GM10248 (cell line): ENCODE measurements at regions of chr14 and their contacts with region 1.

Region 1: DNA sequence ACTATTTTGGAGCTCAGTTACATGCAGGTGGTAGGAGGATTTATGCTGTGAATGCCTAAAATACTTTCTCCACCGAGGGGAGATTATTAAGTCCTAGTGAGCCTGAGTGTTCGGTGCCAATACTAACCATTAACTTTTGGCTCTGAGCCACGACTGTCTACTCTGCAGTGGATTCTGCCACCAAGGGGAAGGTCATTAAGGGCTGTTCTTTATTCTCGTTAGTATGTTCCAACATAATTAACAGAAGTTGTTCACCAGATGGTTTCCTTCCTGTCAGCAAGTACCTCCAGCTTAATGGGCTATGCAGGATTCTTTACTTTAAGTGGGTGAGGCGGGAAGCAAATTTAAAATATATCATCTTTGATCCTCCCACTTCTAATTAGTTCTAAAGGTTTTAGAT is 326.3 kb downstream of the BMP4 start:
- DNase-seq: no peak
- CTCF ChIP-seq: no peak

Region 2: GRCh38 chr14:53247596-53248370 is 382.6 kb before region 1 on chr14:
- CTCF ChIA-PET with region 1: no interaction called
- POLR2A ChIA-PET with region 1: no interaction called
- DNase-seq: no peak
- CTCF ChIP-seq: no peak

Region 3: GRCh38 chr14:53591816-53592215 is 38.5 kb before region 1 on chr14:
- CTCF ChIA-PET with region 1: no interaction called
- POLR2A ChIA-PET with region 1: no interaction called
- DNase-seq: no peak
- CTCF ChIP-seq: no peak

Region 4: DNA sequence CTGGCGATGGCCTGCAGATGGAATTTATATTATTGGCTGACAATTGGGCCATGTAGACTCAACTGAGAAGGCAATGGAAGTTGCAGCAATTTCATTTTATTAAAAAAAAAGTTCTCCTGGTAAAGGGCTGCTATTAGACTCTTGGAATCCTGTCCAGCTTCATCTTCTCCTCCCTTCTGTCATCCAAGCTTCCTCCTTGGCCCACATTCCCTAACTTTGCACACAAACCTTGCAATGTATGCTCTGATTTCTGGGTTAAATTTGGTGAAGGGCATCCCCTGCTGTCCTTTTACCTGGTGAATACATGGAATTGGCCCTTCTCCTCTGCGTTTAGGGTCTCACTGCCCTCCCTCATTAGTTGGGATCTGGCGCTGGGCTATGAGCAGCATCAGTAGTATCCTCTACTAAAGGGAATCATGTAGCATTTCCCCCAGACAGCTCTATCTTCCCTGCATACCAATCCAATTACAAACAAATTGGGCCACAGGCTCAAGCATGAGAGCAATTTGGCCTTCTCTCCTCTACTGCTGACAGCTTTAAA is 10.6 kb before region 1 on chr14:
- CTCF ChIA-PET with region 1: interaction called, 11 read pairs
- POLR2A ChIA-PET with region 1: no interaction called
- DNase-seq: no peak
- CTCF ChIP-seq: no peak

Region 5: GRCh38 chr14:53640685-53641084 is 10.3 kb after region 1 on chr14:
- CTCF ChIA-PET with region 1: interaction called, 15 read pairs
- POLR2A ChIA-PET with region 1: no interaction called
- DNase-seq: no peak
- CTCF ChIP-seq: no peak

Region 6: DNA sequence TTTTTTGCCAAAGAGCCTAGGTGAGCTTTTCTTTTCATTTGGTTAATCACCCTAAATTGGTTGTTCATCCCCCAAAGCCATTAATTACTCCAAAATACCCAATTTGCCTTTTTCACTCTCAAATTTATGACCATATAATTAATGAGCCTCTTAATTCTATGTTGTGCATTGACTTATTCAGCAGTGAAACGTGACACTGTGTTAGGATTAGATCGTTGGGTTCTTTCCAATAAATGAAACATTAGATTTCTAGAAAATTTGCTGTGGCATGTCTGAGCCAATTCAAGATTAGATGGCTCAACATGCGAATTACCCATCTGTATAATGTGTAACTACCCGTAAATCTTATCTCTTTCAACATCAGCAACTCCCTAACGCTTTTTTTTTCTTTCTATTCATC is 52.9 kb after region 1 on chr14:
- CTCF ChIA-PET with region 1: no interaction called
- POLR2A ChIA-PET with region 1: no interaction called
- DNase-seq: no peak
- CTCF ChIP-seq: no peak